A549 (cell line): ENCODE measurements at regions of chr2 and their contacts with region 1.

Region 1: DNA sequence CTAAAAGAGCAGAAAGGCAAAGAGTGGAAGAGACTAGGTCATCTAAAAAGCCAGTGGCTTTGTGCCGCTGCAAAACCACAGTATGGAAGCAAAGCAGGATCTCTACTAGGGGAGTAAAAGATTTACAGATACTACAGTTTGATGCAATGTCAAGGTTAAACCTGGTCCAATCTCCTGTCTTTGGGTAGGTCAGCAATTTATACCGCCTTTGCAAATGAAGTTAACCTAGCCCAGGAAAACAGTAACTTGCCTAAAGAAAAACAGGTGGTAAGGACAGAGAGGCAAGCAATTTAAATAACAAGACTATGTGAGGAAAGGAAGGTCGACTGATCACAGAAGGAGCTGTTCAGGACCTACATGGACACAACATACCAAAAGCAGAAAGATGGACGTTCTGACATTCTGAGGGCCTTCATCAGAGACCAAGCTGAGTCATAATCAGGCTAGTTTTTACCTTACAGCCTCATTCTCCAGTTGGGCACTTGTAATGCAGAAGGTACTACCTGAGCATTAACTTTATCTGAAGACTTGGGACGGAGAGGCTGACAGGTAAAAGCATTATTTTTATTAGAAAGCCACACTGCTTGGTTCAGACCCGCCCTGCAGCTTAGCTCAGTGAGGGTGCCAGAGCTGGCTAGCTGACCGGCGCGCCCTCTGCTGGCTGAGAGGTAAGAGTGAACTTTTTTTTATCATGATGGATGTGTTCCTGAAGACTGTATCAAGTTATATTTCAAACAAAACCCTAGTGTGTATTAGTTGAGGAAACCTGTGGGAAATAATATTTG is 15.9 kb downstream of the CDKL4 start:
- DNase-seq: peak; percentile 76 to 79
- ATAC-seq: peak; percentile 84 to 92
- H3K4me3 ChIP-seq: no peak overlapping the region
- H3K27ac ChIP-seq: peak overlapping the region; percentile 19 to 26; a peak in 2 of 6 replicates
- H3K4me1 ChIP-seq: no peaks in the 10 kb centered on the region
- CTCF ChIP-seq: peak; percentile 97
- EP300 ChIP-seq: no peak
- POLR2A ChIP-seq: no peak
- RAD21 ChIP-seq: peak; percentile 85 to 88

Region 2: DNA sequence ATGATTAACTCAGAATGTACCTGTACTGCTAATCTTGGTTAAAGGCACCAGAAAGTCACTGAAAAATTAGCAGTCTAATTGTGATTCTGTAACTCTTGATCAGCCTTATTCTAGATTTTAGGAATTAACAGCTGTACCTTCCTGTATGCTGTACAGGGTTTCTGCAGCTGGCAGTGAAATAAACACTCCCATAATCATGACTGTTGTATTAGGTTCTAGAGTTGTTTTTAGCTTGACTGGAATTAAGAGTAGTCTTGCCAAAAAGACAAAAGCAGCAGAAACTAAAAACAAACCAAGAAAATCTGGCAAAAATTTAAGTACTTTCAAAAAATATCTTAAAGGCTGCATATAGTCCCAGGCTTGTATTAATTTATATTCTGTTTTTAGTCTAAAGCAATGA is 210.5 kb before region 1 on chr2:
- CTCF ChIA-PET with region 1: interaction called, 11 read pairs
- POLR2A ChIA-PET with region 1: no interaction called
- DNase-seq: no peak
- ATAC-seq: no peak
- H3K4me3 ChIP-seq: no peak overlapping the region
- H3K27ac ChIP-seq: no peak overlapping the region
- H3K4me1 ChIP-seq: no peaks in the 10 kb centered on the region
- CTCF ChIP-seq: no peak
- EP300 ChIP-seq: no peak
- POLR2A ChIP-seq: no peak
- RAD21 ChIP-seq: no peak

Region 3: GRCh38 chr2:39059366-39059952 is 168.4 kb before region 1 on chr2:
- CTCF ChIA-PET with region 1: interaction called, 139 read pairs
- POLR2A ChIA-PET with region 1: no interaction called
- DNase-seq: peak; percentile 12 to 59
- ATAC-seq: peak in 1 of 2 experiments; percentile 63; a peak in 3 of 6 replicates
- H3K4me3 ChIP-seq: no peak overlapping the region
- H3K27ac ChIP-seq: no peak overlapping the region
- H3K4me1 ChIP-seq: no peaks in the 10 kb centered on the region
- CTCF ChIP-seq: peak; percentile 95
- EP300 ChIP-seq: no peak
- POLR2A ChIP-seq: no peak
- RAD21 ChIP-seq: peak; percentile 91 to 94

Region 4: GRCh38 chr2:39115556-39115955 is 112.3 kb before region 1 on chr2:
- CTCF ChIA-PET with region 1: interaction called, 53 read pairs
- POLR2A ChIA-PET with region 1: interaction called, 5 read pairs
- DNase-seq: no peak
- ATAC-seq: no peak
- H3K4me3 ChIP-seq: no peak overlapping the region
- H3K27ac ChIP-seq: no peak overlapping the region
- H3K4me1 ChIP-seq: peaks cover 11% of the 10 kb centered on the region
- CTCF ChIP-seq: no peak
- EP300 ChIP-seq: no peak
- POLR2A ChIP-seq: no peak
- RAD21 ChIP-seq: no peak

Region 5: DNA sequence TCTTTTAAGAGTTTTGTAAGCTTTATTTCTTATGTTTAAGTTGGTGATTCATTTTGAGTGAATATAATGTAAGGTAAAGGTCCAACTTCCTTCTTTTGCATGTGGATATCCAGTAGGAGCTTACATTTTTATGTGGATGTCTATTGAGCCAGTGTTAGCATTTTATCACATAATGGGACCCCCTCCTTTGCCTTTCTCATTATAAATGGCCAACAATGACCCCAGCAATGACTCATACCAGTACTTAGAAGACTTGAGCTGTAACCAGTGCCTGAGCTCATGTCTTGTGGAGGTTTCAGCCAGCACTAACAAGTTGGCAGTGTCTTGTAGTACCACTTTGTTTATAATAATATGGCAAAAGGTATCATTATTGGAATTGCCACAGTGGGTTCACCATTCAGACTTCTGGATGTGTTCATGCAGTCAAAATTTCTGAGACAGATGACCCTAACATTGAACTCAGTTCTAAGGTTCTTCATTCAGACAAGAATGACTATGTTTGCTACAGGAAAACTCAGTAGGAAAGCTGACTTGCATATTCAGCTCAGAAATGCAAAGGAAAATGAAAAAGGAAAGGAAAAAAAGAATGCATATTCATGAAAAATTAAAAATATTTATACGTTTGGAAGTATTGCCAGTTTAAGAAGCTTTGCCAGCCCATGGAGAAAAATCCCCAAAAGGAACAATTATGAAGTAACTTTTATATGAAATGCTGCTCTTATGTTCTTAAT is 25.0 kb before region 1 on chr2:
- CTCF ChIA-PET with region 1: interaction called, 14 read pairs
- POLR2A ChIA-PET with region 1: no interaction called
- DNase-seq: no peak
- ATAC-seq: peak in 1 of 2 experiments; percentile 59; a peak in 1 of 6 replicates
- H3K4me3 ChIP-seq: no peak overlapping the region
- H3K27ac ChIP-seq: no peak overlapping the region
- H3K4me1 ChIP-seq: peaks cover 3% of the 10 kb centered on the region; the same call in 1 of the 3 replicates
- CTCF ChIP-seq: no peak
- EP300 ChIP-seq: no peak
- POLR2A ChIP-seq: no peak
- RAD21 ChIP-seq: no peak

Region 6: GRCh38 chr2:39568561-39569006 is 340.8 kb after region 1 on chr2:
- CTCF ChIA-PET with region 1: no interaction called
- POLR2A ChIA-PET with region 1: no interaction called
- DNase-seq: no peak
- ATAC-seq: peak in 1 of 2 experiments; percentile 65; a peak in 3 of 6 replicates
- H3K4me3 ChIP-seq: no peak overlapping the region
- H3K27ac ChIP-seq: no peak overlapping the region
- H3K4me1 ChIP-seq: peaks cover 10% of the 10 kb centered on the region; the same call in 1 of the 3 replicates
- CTCF ChIP-seq: no peak
- EP300 ChIP-seq: no peak
- POLR2A ChIP-seq: no peak
- RAD21 ChIP-seq: no peak

Region 7: GRCh38 chr2:39920307-39920801 is 692.5 kb after region 1 on chr2:
- CTCF ChIA-PET with region 1: no interaction called
- POLR2A ChIA-PET with region 1: no interaction called
- DNase-seq: no peak
- ATAC-seq: no peak
- H3K4me3 ChIP-seq: no peak overlapping the region
- H3K27ac ChIP-seq: no peak overlapping the region
- H3K4me1 ChIP-seq: no peaks in the 10 kb centered on the region
- CTCF ChIP-seq: no peak
- EP300 ChIP-seq: no peak
- POLR2A ChIP-seq: no peak
- RAD21 ChIP-seq: no peak